PC-3 (cell line): ENCODE measurements at regions of chr2 and their contacts with region 1.

Region 1: GRCh38 chr2:203394519-203395227 is 66.5 kb downstream of the ABI2 start:
- DNase-seq: no peak
- ATAC-seq: no peak
- H3K4me3 ChIP-seq: no peak overlapping the region
- H3K27ac ChIP-seq: no peak overlapping the region
- H3K4me1 ChIP-seq: peaks cover 12% of the 10 kb centered on the region; the same call in 1 of the 2 replicates
- H3K27me3 ChIP-seq: no peaks in the 10 kb centered on the region
- CTCF ChIP-seq: peak; percentile 46

Region 2: DNA sequence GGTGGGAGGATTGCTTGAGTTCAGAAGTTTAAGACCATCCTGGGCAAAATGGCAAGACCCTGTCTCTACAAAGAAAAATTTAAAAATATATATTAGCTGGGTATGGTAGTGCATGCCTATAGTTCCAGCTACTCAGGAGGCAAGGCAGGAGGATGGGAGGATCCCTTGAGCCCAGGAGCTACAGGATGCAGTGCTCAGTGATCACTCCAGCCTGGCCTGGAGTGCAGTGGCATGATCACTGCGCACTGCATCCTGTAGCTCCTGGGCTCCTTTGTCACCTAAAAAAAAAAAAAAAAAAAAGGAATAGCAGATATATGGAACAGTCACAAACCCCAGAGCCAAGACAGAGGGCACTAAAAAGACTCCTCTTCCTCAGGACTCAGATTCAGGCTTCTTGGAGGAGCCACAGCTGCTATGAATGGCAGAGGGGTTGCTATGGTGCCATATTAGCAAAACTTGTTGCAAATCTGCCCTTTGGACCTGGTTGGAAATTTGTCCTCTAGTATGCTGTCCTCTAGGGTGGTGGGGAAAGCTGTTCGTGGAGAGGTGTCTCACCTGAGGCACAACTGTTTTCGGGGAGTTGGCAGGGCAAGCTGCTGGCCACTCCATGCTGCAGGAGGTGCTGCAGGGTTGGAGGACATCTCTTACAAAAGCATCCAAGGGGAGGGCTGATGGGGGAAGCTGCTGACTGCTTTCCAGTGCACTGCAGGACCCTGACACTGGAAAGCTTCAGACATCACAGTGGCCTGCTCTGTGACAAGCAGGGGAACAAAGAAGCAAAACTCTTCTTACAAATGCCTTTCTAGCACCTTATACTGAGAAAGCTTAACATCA is 133.1 kb before region 1 on chr2:
- CTCF ChIA-PET with region 1: no interaction called
- POLR2A ChIA-PET with region 1: interaction called, 11 read pairs
- intact Hi-C with region 1: no loop called
- DNase-seq: no peak
- ATAC-seq: no peak
- H3K4me3 ChIP-seq: no peak overlapping the region
- H3K27ac ChIP-seq: no peak overlapping the region
- H3K4me1 ChIP-seq: no peaks in the 10 kb centered on the region
- H3K27me3 ChIP-seq: no peaks in the 10 kb centered on the region
- CTCF ChIP-seq: no peak

Region 3: GRCh38 chr2:203340791-203341487 is 53.7 kb before region 1 on chr2:
- CTCF ChIA-PET with region 1: no interaction called
- POLR2A ChIA-PET with region 1: no interaction called
- intact Hi-C with region 1: loop called (anchors 5 kb)
- DNase-seq: peak; percentile 97
- ATAC-seq: peak; percentile 91
- H3K4me3 ChIP-seq: peak overlapping the region; percentile 20; the same call in 1 of the 2 replicates
- H3K27ac ChIP-seq: peak overlapping the region; percentile 77
- H3K4me1 ChIP-seq: peaks cover 32% of the 10 kb centered on the region
- H3K27me3 ChIP-seq: no peaks in the 10 kb centered on the region
- CTCF ChIP-seq: no peak

Region 4: GRCh38 chr2:203470371-203470770 is 75.7 kb after region 1 on chr2:
- CTCF ChIA-PET with region 1: no interaction called
- POLR2A ChIA-PET with region 1: no interaction called
- intact Hi-C with region 1: no loop called
- DNase-seq: no peak
- ATAC-seq: no peak
- H3K4me3 ChIP-seq: no peak overlapping the region
- H3K27ac ChIP-seq: no peak overlapping the region
- H3K4me1 ChIP-seq: no peaks in the 10 kb centered on the region
- H3K27me3 ChIP-seq: no peaks in the 10 kb centered on the region
- CTCF ChIP-seq: no peak